Activated naive CD4-positive, alpha-beta T cell treated with anti-CD3 and anti-CD28 coated beads for 36 hours (primary cell): ENCODE measurements at regions of chr17 and their contacts with region 1.

Region 1: DNA sequence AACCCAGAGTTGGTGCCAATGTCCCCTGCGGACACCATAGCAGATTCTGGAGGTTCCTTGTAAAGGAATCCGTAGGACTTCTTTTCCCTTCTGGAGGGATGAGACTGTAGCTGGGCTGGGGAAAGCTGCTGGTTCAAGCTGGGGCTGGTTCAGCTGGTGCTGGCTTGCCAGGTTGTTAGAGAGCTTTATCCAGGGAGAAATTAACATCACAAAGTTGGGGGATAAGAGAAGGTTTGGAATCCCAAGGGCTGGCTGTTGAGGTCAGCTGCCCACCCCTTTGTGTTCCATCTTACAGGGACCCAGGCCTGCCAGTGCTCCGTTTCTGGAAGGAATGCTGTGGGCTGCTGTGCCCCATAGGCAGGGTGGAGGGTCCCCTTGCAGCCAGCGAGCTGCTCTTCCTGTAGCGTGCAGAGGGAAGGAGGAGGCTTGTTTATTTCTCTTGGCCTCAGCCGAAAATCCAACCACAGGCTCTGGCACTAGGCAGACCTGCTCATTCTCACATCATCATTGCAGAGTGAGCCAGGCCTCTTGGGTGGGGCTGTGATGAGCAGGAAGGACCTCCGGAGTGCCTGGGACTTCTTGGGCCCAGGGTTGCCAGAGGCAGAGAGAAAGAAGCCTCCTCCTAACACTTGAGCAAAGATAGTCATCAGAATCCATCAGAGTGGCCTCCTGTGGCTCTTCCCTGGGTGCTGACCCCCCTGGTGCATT is 251.1 kb downstream of the SEC14L1 start:
- DNase-seq: peak; percentile 78
- H3K4me3 Mint-ChIP-seq: peak overlapping the region; percentile 61
- H3K27ac Mint-ChIP-seq: peak overlapping the region; percentile 91
- H3K4me1 Mint-ChIP-seq: peaks cover 57% of the 10 kb centered on the region
- H3K27me3 Mint-ChIP-seq: no peaks in the 10 kb centered on the region

Region 2: GRCh38 chr17:77345260-77345910 is 46.4 kb before region 1 on chr17:
- CTCF ChIA-PET with region 1: no interaction called
- intact Hi-C with region 1: loop called (anchors 2 kb)
- DNase-seq: no peak
- H3K4me3 Mint-ChIP-seq: no peak overlapping the region
- H3K27ac Mint-ChIP-seq: no peak overlapping the region
- H3K4me1 Mint-ChIP-seq: peaks cover 41% of the 10 kb centered on the region
- H3K27me3 Mint-ChIP-seq: no peaks in the 10 kb centered on the region

Region 3: GRCh38 chr17:77372444-77373298 is 19.2 kb before region 1 on chr17:
- CTCF ChIA-PET with region 1: interaction called, 5 read pairs
- intact Hi-C with region 1: loop called (anchors 1 kb)
- DNase-seq: peak; percentile 65
- H3K4me3 Mint-ChIP-seq: peak overlapping the region; percentile 67
- H3K27ac Mint-ChIP-seq: no peak overlapping the region
- H3K4me1 Mint-ChIP-seq: peaks cover 65% of the 10 kb centered on the region
- H3K27me3 Mint-ChIP-seq: no peaks in the 10 kb centered on the region